ENCODE measurements at regions of chr1 and their contacts with region 1.

Region 1: GRCh38 chr1:173824331-173825081 is at the starts of genes CENPL and DARS2:
- DNase-seq: peak; percentile 95 to 98 (median 97)
- H3K4me3 ChIP-seq: peak within 1 kb of the TSS; percentile 65
- H3K27ac ChIP-seq: peak within 1 kb of the TSS; percentile 77 to 84
- H3K4me1 ChIP-seq: peaks cover 2% of the 10 kb centered on the region
- H3K27me3 ChIP-seq: no peaks in the 10 kb centered on the region
- CTCF ChIP-seq: no peak
- EP300 ChIP-seq: no peak
- POLR2A ChIP-seq: no peak
- total RNA-seq, gene CENPL: 1.1 to 5.6 (median 3.1) TPM
- total RNA-seq, gene DARS2: 7.8 to 11.5 (median 9.1) TPM

Region 2: GRCh38 chr1:173409613-173410012 is 414.9 kb before region 1 on chr1:
- intact Hi-C with region 1: loop called in 1 of 4 experiments (anchors 10 kb)
- DNase-seq: peak; percentile 28 to 63 (median 45)
- H3K4me3 ChIP-seq: no peak overlapping the region
- H3K27ac ChIP-seq: no peak overlapping the region
- H3K4me1 ChIP-seq: peaks cover 9% of the 10 kb centered on the region
- H3K27me3 ChIP-seq: no peaks in the 10 kb centered on the region
- CTCF ChIP-seq: no peak
- EP300 ChIP-seq: no peak
- POLR2A ChIP-seq: no peak

Region 3: GRCh38 chr1:173420330-173420806 is 404.1 kb before region 1 on chr1:
- intact Hi-C with region 1: loop called (anchors 5 to 10 kb)
- DNase-seq: peak; percentile 31 to 64 (median 49)
- H3K4me3 ChIP-seq: no peak overlapping the region
- H3K27ac ChIP-seq: no peak overlapping the region
- H3K4me1 ChIP-seq: peaks cover 1% of the 10 kb centered on the region
- H3K27me3 ChIP-seq: no peaks in the 10 kb centered on the region
- CTCF ChIP-seq: peak; percentile 66 to 89 (median 79)
- EP300 ChIP-seq: no peak
- POLR2A ChIP-seq: no peak

Region 4: GRCh38 chr1:173429471-173430402 is 394.8 kb before region 1 on chr1:
- intact Hi-C with region 1: loop called in 3 of 4 experiments (anchors 5 to 10 kb)
- DNase-seq: peak; percentile 91 to 92 (median 91)
- H3K4me3 ChIP-seq: no peak overlapping the region
- H3K27ac ChIP-seq: peak overlapping the region; percentile 21 to 71
- H3K4me1 ChIP-seq: no peaks in the 10 kb centered on the region
- H3K27me3 ChIP-seq: no peaks in the 10 kb centered on the region
- CTCF ChIP-seq: peak in 2 of 3 donors; percentile 30 to 40
- EP300 ChIP-seq: no peak
- POLR2A ChIP-seq: peak; percentile 10

Region 5: GRCh38 chr1:173476664-173477285 is 347.7 kb before region 1 on chr1:
- intact Hi-C with region 1: loop called in 1 of 4 experiments (anchors 5 kb)
- DNase-seq: peak; percentile 84 to 90 (median 89)
- H3K4me3 ChIP-seq: peak overlapping the region; percentile 94
- H3K27ac ChIP-seq: peak overlapping the region; percentile 65 to 88
- H3K4me1 ChIP-seq: peaks cover 9% of the 10 kb centered on the region
- H3K27me3 ChIP-seq: no peaks in the 10 kb centered on the region
- CTCF ChIP-seq: peak in 1 of 3 donors; percentile 12
- EP300 ChIP-seq: no peak
- POLR2A ChIP-seq: peak; percentile 15

Region 6: DNA sequence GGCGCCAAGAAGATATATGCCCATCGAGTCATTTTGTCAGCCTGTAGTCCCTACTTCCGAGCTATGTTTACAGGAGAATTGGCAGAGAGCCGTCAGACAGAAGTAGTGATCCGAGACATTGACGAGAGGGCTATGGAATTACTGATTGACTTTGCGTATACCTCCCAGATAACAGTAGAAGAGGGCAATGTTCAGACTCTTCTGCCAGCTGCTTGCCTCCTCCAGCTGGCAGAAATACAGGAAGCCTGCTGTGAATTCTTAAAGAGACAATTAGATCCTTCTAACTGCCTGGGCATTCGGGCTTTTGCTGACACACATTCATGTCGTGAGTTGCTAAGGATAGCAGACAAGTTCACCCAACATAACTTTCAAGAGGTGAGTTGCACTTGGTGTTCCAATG is 90.6 kb before region 1 on chr1:
- intact Hi-C with region 1: no loop called
- DNase-seq: no peak
- H3K4me3 ChIP-seq: no peak overlapping the region
- H3K27ac ChIP-seq: no peak overlapping the region
- H3K4me1 ChIP-seq: no peaks in the 10 kb centered on the region
- H3K27me3 ChIP-seq: no peaks in the 10 kb centered on the region
- CTCF ChIP-seq: no peak
- EP300 ChIP-seq: no peak
- POLR2A ChIP-seq: no peak

Measured in ovary (tissue), 10 donors.